Transverse colon (tissue), 4 donors: ENCODE measurements at regions of chr5 and their contacts with region 1.

Region 1: DNA sequence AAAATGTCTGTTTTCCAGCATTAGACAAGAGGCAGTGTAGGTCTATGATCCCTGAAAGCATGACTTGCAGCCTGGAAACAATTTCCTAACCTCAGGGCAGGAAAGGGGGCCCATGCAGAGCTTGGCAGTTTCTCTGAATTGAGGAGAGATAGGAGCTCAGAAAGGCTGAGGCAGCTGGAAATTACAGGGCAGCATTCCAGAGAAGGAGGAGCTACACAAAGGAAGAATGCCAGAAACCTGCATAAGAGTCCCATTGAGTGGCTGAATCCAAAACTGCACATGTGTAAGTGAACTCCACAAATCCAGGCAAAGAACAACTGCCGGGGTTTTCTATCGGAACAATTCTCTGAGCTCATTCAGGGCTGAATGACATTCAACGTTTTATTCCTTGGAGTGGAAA is 346.8 kb downstream of the PIK3R1 start:
- DNase-seq: no peak
- H3K4me3 ChIP-seq: no peak overlapping the region
- H3K27ac ChIP-seq: no peak overlapping the region
- H3K4me1 ChIP-seq: no peaks in the 10 kb centered on the region
- H3K27me3 ChIP-seq: no peaks in the 10 kb centered on the region
- CTCF ChIP-seq: no peak
- EP300 ChIP-seq: no peak
- POLR2A ChIP-seq: no peak

Region 2: DNA sequence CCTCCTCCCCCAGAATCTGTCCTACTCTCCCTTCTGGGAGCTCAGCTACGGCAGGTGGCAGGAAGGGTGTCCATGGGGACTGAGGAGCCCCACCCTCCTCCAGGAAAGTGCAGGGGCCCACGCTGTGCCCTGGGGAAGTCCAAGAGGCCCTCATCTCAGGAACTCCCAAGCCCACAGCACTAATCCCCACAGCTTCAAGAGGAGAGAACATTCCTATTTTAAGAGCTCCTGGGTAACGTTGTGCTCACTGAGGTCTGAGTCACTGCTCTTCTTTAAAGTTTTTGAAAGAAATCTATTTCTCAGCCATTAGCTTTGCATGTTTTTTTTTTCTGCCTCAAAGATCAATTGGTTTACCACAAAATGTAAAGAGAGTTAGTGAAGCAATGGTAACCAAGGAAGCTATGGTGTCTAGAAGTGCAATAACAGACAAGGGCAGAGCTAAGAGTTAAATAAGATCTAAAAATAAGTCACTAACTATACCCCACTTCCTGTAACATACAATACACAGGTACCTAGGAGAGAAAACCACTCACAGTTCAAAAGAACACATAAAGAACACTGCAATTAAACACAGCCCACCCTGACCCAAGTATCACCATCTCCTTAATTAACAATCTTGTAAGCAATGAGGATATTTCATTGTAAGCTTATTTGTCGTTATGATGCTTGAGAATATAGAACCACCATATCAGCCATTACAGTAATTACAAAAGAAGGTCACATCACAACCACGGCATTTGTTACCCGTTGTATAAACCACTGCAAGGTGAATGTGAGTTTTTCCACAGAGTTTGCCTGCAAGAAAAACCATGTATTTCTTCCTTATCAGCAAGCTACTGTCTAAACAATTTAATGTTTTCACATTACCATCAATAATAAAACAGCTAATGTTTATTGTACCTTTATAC is 149.2 kb after region 1 on chr5:
- in situ Hi-C with region 1: no loop called
- intact Hi-C with region 1: loop called (anchors 2 kb)
- DNase-seq: no peak
- H3K4me3 ChIP-seq: no peak overlapping the region
- H3K27ac ChIP-seq: no peak overlapping the region
- H3K4me1 ChIP-seq: no peaks in the 10 kb centered on the region
- H3K27me3 ChIP-seq: no peaks in the 10 kb centered on the region
- CTCF ChIP-seq: no peak
- EP300 ChIP-seq: no peak
- POLR2A ChIP-seq: no peak

Region 3: DNA sequence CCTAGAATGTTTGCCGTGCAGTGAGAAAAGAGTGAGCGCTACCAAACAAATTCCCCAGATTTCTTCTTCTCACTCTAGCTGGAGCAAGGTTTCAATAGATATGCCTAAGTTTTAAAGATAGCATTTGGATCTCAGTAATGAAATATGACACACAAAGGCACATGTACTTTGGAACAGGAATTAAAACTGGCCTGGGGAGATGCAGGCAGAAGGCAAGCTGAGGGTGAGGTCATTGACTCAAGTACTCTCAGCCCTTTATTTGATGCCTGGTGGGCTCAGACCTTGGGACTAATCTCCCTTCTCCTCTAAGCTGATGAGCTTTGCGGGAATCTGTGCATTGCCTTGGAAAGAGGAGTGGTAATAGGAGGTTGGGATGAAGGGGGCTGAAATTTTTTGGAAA is 208.2 kb after region 1 on chr5:
- in situ Hi-C with region 1: no loop called
- intact Hi-C with region 1: no loop called
- DNase-seq: no peak
- H3K4me3 ChIP-seq: no peak overlapping the region
- H3K27ac ChIP-seq: no peak overlapping the region
- H3K4me1 ChIP-seq: no peaks in the 10 kb centered on the region
- H3K27me3 ChIP-seq: no peaks in the 10 kb centered on the region
- CTCF ChIP-seq: no peak
- EP300 ChIP-seq: no peak
- POLR2A ChIP-seq: no peak